ENCODE measurements at regions of chr14 and their contacts with region 1.

Region 1: GRCh38 chr14:52695481-52696091 is at the start of gene ERO1A:
- ATAC-seq: peak; percentile 88 to 91 (median 90)
- H3K4me3 ChIP-seq: peak within 1 kb of the TSS; percentile 65 to 96 (median 86)
- H3K27ac ChIP-seq: peak within 1 kb of the TSS; percentile 90 to 91
- H3K4me1 ChIP-seq: peaks cover 12 to 23% of the 10 kb centered on the region in 2 donors
- total RNA-seq, gene ERO1A: 16.3 to 37.4 (median 24.8) TPM

Region 2: DNA sequence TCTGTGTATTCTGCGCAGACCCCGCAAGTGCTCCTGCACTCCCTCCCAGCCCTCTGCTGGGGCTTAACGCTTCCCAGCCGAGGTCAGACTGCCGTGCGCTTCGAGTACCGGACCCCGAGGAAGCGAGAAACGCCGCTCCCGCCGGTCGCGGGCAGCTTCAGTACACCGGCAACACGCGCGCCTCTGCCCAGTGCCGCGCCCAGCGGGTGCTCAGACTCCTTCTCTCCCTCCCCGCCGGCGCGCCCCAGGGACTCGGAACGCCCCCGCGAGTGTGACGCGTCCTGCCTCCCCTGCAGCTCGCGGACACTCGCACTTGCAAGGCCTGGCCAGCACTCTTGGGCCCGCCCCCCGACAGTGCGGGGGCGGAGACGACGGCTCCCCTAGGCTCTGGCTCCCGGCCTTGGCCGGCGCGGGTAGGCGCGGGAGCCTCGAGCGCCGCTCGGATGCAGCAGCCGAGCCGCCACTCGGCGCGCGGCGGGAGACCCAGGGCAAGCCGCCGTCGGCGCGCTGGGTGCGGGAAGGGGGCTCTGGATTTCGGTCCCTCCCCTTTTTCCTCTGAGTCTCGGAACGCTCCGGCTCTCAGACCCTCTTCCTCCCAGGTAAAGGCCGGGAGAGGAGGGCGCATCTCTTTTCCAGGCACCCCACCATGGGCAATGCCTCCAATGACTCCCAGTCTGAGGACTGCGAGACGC is 381.5 kb before region 1 on chr14 and contains the start of gene PTGER2:
- in situ Hi-C with region 1: loop called in 1 of 9 experiments (anchors 25 kb)
- ATAC-seq: peak; percentile 89 to 96 (median 92)
- H3K4me3 ChIP-seq: peak within 1 kb of the TSS; percentile 31 to 37 (median 34)
- H3K27ac ChIP-seq: no peak within 1 kb of the TSS
- H3K4me1 ChIP-seq: no peaks in the 10 kb centered on the region
- total RNA-seq, gene PTGER2: 0.14 to 6.3 (median 0.36) TPM in 7 of 8 experiments, not detected in the other

Measured in motor neuron (in vitro differentiated cells).